ENCODE measurements at regions of chr5 and their contacts with region 1.

Region 1: DNA sequence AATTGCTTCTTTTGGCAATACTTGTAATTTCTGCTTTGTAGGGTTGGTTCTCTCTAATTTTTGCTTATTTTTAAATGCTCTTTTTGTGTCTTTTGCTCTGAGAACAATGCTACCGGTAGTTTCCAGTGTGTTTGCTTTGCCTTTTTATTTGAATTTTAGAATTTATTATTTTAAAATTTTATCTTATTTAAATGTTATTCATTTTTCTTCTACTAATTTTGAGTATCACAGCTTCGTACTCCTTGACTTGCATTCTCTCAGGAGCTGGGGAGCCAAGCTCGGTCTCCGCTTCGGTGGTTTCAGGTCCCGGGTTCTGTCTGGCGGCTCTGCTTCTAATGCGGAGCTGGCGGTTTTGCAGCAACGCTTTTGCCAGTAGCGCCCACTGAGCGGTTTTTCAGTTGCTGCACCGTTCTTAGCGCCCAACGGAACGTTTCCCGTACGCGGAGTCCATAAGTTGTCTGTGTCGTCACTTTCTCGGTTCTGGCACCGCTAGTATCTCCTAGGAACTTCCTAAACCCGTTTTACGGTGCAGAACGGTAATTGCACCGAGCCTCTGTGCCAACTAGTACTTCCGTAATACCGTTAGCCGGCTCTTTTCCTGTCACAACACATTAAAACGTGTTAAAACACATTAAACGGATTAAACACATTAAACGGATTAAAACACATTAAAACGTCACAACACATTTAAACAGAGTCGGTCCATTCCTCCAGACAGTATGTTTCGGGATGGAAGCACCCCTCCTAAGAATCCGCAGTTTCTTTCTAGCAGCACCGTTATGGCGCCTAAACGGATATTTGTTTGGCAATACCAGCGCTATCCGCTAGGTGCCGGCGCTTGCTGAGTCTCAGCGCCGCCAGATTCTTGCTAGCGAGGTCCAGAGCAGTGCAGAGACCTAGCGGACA is 45.6 kb downstream of the ANXA2R start:
- DNase-seq: peak; percentile 59 to 96 (median 65)
- ATAC-seq: peak; percentile 80
- H3K4me3 ChIP-seq: peak overlapping the region; percentile 43
- H3K27ac ChIP-seq: peak overlapping the region; percentile 80
- H3K4me1 ChIP-seq: peaks cover 6 to 26% of the 10 kb centered on the region in 2 experiments; a peak in 4 of 5 replicates
- H3K27me3 ChIP-seq: no peaks in the 10 kb centered on the region
- CTCF ChIP-seq: peak; percentile 94 to 97 (median 95)
- EP300 ChIP-seq: peak; percentile 32; the same call in 1 of the 2 replicates
- POLR2A ChIP-seq: peak; percentile 70
- RAD21 ChIP-seq: peak; percentile 68 to 80

Region 2: GRCh38 chr5:42908509-42909488 is 85.7 kb before region 1 on chr5:
- CTCF ChIA-PET with region 1: interaction called, 3 read pairs
- POLR2A ChIA-PET with region 1: interaction called, 4 read pairs
- in situ Hi-C with region 1: no loop called
- intact Hi-C with region 1: loop called (anchors 5 kb)
- DNase-seq: peak; percentile 85 to 96 (median 88)
- ATAC-seq: peak; percentile 95
- H3K4me3 ChIP-seq: peak overlapping the region; percentile 31
- H3K27ac ChIP-seq: no peak overlapping the region
- H3K4me1 ChIP-seq: peaks cover 3 to 6% of the 10 kb centered on the region in 2 experiments; a peak in 2 of 5 replicates
- H3K27me3 ChIP-seq: peaks cover 3 to 7% of the 10 kb centered on the region in 2 experiments; a peak in 3 of 5 replicates
- CTCF ChIP-seq: peak; percentile 90 to 97 (median 92)
- EP300 ChIP-seq: no peak; the same call in 1 of the 2 replicates
- POLR2A ChIP-seq: no peak
- RAD21 ChIP-seq: peak; percentile 82 to 91

Region 3: DNA sequence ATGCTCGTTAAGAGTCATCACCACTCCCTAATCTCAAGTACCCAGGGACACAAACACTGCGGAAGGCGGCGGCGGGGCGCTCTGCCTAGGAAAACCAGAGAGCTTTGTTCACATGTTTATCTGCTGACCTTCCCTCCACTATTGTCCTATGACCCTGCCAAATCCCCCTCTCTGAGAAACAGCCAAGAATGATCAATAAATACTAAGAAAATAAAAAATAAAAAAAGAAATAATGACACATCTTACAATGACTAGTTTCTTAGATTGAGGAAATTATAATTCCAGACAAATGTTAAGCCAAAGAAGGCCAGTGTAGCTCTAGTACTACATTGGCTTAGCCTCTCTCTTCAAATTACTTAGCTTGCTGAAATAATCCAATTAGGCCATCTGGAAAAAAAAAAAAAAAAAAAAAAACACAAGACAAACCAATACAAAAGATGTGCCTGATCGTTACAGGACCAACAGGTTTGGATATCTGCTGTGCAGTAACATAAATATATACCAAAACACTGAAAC is 12.3 kb before region 1 on chr5:
- CTCF ChIA-PET with region 1: no interaction called
- POLR2A ChIA-PET with region 1: interaction called, 5 read pairs
- in situ Hi-C with region 1: no loop called
- intact Hi-C with region 1: loop called (anchors 1 kb)
- DNase-seq: peak in 1 of 4 experiments; percentile 90
- ATAC-seq: peak; percentile 78
- H3K4me3 ChIP-seq: no peak overlapping the region
- H3K27ac ChIP-seq: peak overlapping the region; percentile 44
- H3K4me1 ChIP-seq: peaks cover 15 to 24% of the 10 kb centered on the region in 2 experiments; a peak in 4 of 5 replicates
- H3K27me3 ChIP-seq: no peaks in the 10 kb centered on the region
- CTCF ChIP-seq: no peak
- EP300 ChIP-seq: peak; percentile 52; the same call in 1 of the 2 replicates
- POLR2A ChIP-seq: no peak
- RAD21 ChIP-seq: no peak

Region 4: DNA sequence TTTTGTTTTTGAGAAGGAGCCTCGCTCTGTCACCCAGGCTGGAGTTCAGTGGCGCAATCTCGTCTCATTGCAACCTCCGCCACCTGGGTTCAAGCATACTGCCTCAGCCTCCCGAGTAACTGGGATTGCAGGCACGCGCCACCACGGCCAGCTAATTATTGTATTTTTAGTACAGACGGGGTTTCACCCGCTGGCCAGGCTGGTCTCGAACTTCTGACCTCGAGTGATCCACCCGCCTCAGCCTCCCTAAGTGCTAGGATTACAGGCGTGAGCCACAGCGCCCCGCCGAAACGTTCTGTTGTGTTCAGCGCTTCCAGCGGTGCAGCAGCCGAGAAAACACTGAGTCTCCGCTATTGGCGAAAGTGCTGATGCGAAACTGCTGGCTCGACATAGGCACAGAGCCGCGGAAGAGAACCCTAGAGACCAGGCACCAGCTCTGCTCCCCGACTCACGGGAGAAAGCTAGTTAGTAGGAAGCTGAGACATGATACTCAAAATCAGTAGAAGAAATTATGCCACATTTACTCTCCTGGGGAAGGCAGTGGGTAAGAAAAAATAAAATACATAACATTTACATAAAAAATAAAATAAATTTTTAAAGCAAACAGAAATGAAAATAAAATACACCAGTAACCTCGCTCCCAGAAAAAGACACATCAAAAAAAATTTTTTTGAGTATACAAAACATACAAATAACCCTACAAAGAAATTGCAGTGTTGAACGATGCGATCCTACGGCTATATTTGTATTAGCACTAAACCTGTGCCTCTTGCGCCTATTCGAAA is 14.1 kb after region 1 on chr5:
- CTCF ChIA-PET with region 1: no interaction called
- POLR2A ChIA-PET with region 1: interaction called, 19 read pairs
- in situ Hi-C with region 1: no loop called
- intact Hi-C with region 1: loop called (anchors 1 kb)
- DNase-seq: peak; percentile 72 to 98 (median 80)
- ATAC-seq: peak; percentile 85
- H3K4me3 ChIP-seq: peak overlapping the region; percentile 46
- H3K27ac ChIP-seq: peak overlapping the region; percentile 93
- H3K4me1 ChIP-seq: peaks cover 16 to 21% of the 10 kb centered on the region in 2 experiments; a peak in 4 of 5 replicates
- H3K27me3 ChIP-seq: no peaks in the 10 kb centered on the region
- CTCF ChIP-seq: peak; percentile 53 to 62 (median 59)
- EP300 ChIP-seq: peak; percentile 99
- POLR2A ChIP-seq: peak; percentile 76
- RAD21 ChIP-seq: peak; percentile 22 to 54; a peak in 3 of 4 replicates

Region 5: GRCh38 chr5:43066799-43067741 is 72.6 kb after region 1 on chr5:
- CTCF ChIA-PET with region 1: no interaction called
- POLR2A ChIA-PET with region 1: interaction called, 8 read pairs
- in situ Hi-C with region 1: no loop called
- intact Hi-C with region 1: loop called (anchors 1 kb)
- DNase-seq: peak; percentile 45 to 95 (median 58)
- ATAC-seq: peak; percentile 60
- H3K4me3 ChIP-seq: peak overlapping the region; percentile 80
- H3K27ac ChIP-seq: peak overlapping the region; percentile 97
- H3K4me1 ChIP-seq: peaks cover 14 to 25% of the 10 kb centered on the region in 2 experiments
- H3K27me3 ChIP-seq: no peaks in the 10 kb centered on the region; a peak in 1 of 5 replicates
- CTCF ChIP-seq: 0 out of 6 replicates have a peak, but pooled peaks of 1 of the 3 experiments have one; percentile 2
- EP300 ChIP-seq: peak; percentile 100
- POLR2A ChIP-seq: peak; percentile 78
- RAD21 ChIP-seq: no peak

Measured in K562 (cell line).